IMR-90 (cell line): ENCODE measurements at regions of chrX and their contacts with region 1.

Region 1: GRCh38 chrX:134544513-134545151 is 84.7 kb downstream of the HPRT1 start:
- DNase-seq: no peak
- ATAC-seq: no peak
- H3K4me3 ChIP-seq: no peak overlapping the region
- H3K27ac ChIP-seq: peak overlapping the region; percentile 40; the same call in 1 of the 2 replicates
- H3K4me1 ChIP-seq: peaks cover 5% of the 10 kb centered on the region; the same call in 1 of the 2 replicates
- H3K27me3 ChIP-seq: no peaks in the 10 kb centered on the region
- CTCF ChIP-seq: no peak
- POLR2A ChIP-seq: no peak
- RAD21 ChIP-seq: no peak

Region 2: DNA sequence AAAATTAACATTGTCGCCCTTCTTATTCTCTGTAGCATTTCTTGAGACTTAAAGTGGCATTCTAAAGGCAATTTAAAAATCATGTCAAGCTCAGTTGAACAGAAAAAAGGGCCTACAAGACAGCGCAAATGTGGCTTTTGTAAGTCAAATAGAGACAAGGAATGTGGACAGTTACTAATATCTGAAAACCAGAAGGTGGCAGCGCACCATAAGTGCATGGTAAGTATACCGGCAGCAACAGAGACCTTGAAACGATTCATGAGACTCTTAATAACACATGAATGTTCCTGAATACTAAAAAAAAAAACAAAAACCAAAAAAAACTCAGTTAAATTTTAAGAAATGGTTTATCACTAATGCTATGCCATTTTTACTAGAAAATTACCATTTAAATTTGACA is 167.1 kb before region 1 on chrX:
- CTCF ChIA-PET with region 1: no interaction called
- POLR2A ChIA-PET with region 1: interaction called, 10 read pairs
- dilution Hi-C with region 1: no loop called
- in situ Hi-C with region 1: no loop called
- intact Hi-C with region 1: no loop called
- DNase-seq: peak; percentile 52
- ATAC-seq: no peak
- H3K4me3 ChIP-seq: no peak overlapping the region
- H3K27ac ChIP-seq: no peak overlapping the region
- H3K4me1 ChIP-seq: no peaks in the 10 kb centered on the region
- H3K27me3 ChIP-seq: no peaks in the 10 kb centered on the region
- CTCF ChIP-seq: peak; percentile 43
- POLR2A ChIP-seq: no peak
- RAD21 ChIP-seq: peak; percentile 26; the same call in 1 of the 2 replicates